ENCODE measurements at regions of chr1 and their contacts with region 1.

Region 1: DNA sequence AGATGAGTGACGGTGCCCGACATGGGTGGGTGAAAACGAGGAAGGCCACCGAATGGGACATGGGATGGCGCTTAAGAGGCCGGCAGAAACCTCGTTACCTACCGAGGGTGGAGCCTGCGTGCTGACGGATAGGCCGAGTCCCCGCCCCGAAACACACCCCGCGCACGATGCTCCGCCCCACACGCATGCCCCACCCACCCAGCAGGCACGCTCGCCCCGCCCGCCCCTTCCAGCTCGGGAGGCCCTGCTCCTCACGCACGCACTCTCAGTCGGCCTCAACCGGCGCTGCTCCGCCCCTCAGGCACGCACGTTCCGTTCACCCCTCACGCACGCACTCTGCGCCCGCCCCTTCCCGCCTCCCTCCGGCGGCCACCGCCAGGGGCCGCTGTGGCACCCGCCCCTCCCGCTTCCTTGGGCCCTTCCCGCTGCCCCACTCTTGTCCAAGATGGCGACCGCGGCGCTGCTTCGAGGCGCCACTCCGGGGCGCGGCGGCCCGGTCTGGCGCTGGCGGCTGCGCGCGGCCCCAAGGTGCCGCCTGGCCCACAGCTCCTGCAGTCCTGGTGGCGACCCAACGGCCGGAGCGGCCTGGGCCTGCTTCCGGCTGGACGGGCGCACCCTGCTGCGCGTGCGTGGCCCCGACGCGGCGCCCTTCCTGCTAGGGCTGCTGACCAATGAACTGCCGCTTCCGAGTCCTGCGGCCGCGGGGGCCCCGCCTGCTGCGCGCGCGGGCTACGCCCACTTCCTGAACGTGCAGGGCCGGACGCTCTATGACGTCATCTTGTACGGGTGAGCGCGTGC is at the start of gene IBA57:
- DNase-seq: peak; percentile 99 to 100 (median 100)
- H3K4me3 ChIP-seq: peak within 1 kb of the TSS; percentile 73 to 76
- H3K4me3 Mint-ChIP-seq: peak within 1 kb of the TSS; percentile 90 to 98 (median 92)
- H3K27ac ChIP-seq: peak within 1 kb of the TSS; percentile 96
- H3K27ac Mint-ChIP-seq: peak within 1 kb of the TSS; percentile 96 to 99 (median 98)
- H3K4me1 ChIP-seq: peaks cover 38% of the 10 kb centered on the region
- H3K4me1 Mint-ChIP-seq: peaks cover 22 to 70% (median 44%) of the 10 kb centered on the region in 4 donors
- H3K27me3 ChIP-seq: no peaks in the 10 kb centered on the region
- H3K27me3 Mint-ChIP-seq: no peaks in the 10 kb centered on the region
- total RNA-seq, gene IBA57: 10.9 to 12.0 TPM

Region 2: DNA sequence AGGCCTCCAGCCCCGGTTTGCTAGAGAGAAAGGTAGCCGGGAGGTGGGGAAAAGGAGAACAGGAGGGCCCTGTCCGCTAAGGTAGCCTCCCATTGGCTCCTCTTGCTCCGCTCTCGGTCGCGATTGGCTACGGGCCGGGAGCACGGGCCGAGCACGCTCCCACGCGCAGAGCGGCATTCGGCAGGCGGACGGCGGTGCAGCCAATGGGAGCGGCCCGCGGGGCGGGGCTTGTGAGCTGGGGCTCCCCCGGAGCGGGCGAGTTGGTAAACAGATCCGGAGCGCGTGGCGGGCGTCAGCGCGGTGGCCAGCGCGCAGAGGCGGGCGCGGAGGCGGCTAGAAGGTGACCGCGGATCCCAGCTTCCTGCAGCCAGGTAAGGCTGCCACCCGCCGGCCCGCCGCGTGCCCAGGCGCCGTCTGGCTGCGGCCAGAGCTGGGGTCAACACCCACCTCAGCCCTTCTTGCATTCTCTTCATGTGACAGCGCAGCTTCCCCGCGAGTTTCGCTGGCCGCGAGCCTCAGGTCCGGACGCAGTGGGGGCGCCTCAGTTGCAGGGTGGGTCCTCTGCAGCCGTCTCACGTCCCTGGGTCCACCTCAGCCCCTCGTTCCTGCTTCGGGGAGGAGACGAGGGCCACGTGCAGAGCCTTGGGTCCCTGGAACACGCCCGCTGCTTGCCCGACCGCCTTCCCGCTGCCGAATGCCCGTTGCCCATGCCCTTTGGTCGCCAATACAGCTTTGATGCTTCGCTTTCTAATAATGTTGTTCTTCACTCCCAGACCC is 1225.4 kb before region 1 on chr1 and contains the start of gene COQ8A:
- CTCF ChIA-PET with region 1: no interaction called
- POLR2A ChIA-PET with region 1: interaction called, 3 read pairs
- intact Hi-C with region 1: loop called (anchors 5 kb)
- DNase-seq: peak; percentile 98 to 100 (median 99)
- H3K4me3 ChIP-seq: peak within 1 kb of the TSS; percentile 75 to 84
- H3K4me3 Mint-ChIP-seq: peak within 1 kb of the TSS; percentile 89 to 95 (median 92)
- H3K27ac ChIP-seq: peak within 1 kb of the TSS; percentile 87
- H3K27ac Mint-ChIP-seq: peak within 1 kb of the TSS; percentile 96 to 98 (median 97)
- H3K4me1 ChIP-seq: peaks cover 40% of the 10 kb centered on the region
- H3K4me1 Mint-ChIP-seq: peaks cover 31 to 67% (median 50%) of the 10 kb centered on the region in 4 donors
- H3K27me3 ChIP-seq: no peaks in the 10 kb centered on the region
- H3K27me3 Mint-ChIP-seq: peaks cover 0 to 2% of the 10 kb centered on the region in 2 donors
- total RNA-seq, gene COQ8A: 69.2 to 70.7 TPM

Region 3: GRCh38 chr1:227946624-227947385 is 218.8 kb before region 1 on chr1:
- CTCF ChIA-PET with region 1: no interaction called
- POLR2A ChIA-PET with region 1: no interaction called
- intact Hi-C with region 1: no loop called
- DNase-seq: peak; percentile 36 to 63 (median 50)
- H3K4me3 ChIP-seq: peak overlapping the region; percentile 29 to 43
- H3K4me3 Mint-ChIP-seq: peak overlapping the region; percentile 75 to 84 (median 77)
- H3K27ac ChIP-seq: no peak overlapping the region
- H3K27ac Mint-ChIP-seq: no peak overlapping the region
- H3K4me1 ChIP-seq: peaks cover 18% of the 10 kb centered on the region
- H3K4me1 Mint-ChIP-seq: peaks cover 2 to 14% (median 8%) of the 10 kb centered on the region in 4 donors
- H3K27me3 ChIP-seq: peaks cover 6% of the 10 kb centered on the region
- H3K27me3 Mint-ChIP-seq: peaks cover 3 to 10% of the 10 kb centered on the region in 2 donors

Region 4: DNA sequence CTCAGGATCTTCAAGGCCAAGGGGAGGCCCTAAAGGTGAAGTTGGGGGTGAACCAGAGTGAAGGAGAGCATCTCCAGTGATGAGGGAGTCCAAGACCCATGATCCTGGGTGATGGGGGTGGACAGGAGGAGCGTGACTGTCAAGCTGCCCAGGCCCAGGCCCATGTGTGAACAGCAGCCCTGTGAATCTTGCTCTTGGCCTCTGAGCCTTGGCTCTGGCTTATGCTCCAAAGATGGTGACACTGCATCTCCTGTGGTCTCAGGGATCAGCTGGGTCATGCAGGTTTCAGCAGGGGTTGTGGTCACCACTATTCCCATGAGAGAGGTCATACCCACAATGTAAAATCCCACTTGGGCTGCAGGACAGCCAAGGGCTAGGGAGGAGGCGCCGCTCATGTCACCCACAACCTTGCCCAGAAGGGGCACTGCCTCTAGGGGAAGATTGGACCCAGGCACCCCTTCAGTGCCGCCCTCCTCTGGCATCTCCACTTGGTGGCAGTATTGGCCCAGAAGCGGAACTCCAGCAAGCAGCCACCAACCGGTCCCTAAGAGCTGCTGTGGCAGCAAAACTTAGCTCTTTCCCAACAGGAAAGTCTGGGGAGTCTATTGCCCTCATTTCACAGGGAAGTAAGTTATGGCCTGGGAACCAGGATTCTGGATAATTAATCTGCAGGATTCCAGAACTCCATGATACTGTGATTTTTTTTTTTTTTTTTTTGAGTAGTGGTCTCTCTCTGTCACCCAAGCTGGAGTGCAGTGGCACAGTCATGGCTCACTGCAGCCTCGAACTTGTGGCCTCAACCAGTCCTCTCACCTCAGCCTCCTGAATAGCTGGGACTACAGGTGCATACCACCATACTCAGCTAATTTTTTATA is 166.3 kb before region 1 on chr1:
- CTCF ChIA-PET with region 1: interaction called, 20 read pairs
- POLR2A ChIA-PET with region 1: interaction called, 4 read pairs
- intact Hi-C with region 1: no loop called
- DNase-seq: peak; percentile 61 to 73 (median 66)
- H3K4me3 ChIP-seq: no peak overlapping the region
- H3K4me3 Mint-ChIP-seq: no peak overlapping the region
- H3K27ac ChIP-seq: no peak overlapping the region
- H3K27ac Mint-ChIP-seq: no peak overlapping the region
- H3K4me1 ChIP-seq: no peaks in the 10 kb centered on the region
- H3K4me1 Mint-ChIP-seq: peaks cover 0 to 3% (median 0%) of the 10 kb centered on the region in 4 donors
- H3K27me3 ChIP-seq: peaks cover 8% of the 10 kb centered on the region
- H3K27me3 Mint-ChIP-seq: peaks cover 16 to 26% of the 10 kb centered on the region in 2 donors

Region 5: GRCh38 chr1:228037401-228038386 is 127.9 kb before region 1 on chr1:
- CTCF ChIA-PET with region 1: no interaction called
- POLR2A ChIA-PET with region 1: no interaction called
- intact Hi-C with region 1: no loop called
- DNase-seq: peak in 2 of 5 donors; percentile 9 to 10
- H3K4me3 ChIP-seq: no peak overlapping the region
- H3K4me3 Mint-ChIP-seq: peak overlapping the region in 6 of 8 donors; percentile 31 to 70 (median 44)
- H3K27ac ChIP-seq: no peak overlapping the region
- H3K27ac Mint-ChIP-seq: no peak overlapping the region
- H3K4me1 ChIP-seq: peaks cover 7% of the 10 kb centered on the region
- H3K4me1 Mint-ChIP-seq: peaks cover 0 to 3% (median under 1%) of the 10 kb centered on the region in 4 donors
- H3K27me3 ChIP-seq: peaks cover 23% of the 10 kb centered on the region
- H3K27me3 Mint-ChIP-seq: peaks cover 27 to 31% of the 10 kb centered on the region in 2 donors

Region 6: DNA sequence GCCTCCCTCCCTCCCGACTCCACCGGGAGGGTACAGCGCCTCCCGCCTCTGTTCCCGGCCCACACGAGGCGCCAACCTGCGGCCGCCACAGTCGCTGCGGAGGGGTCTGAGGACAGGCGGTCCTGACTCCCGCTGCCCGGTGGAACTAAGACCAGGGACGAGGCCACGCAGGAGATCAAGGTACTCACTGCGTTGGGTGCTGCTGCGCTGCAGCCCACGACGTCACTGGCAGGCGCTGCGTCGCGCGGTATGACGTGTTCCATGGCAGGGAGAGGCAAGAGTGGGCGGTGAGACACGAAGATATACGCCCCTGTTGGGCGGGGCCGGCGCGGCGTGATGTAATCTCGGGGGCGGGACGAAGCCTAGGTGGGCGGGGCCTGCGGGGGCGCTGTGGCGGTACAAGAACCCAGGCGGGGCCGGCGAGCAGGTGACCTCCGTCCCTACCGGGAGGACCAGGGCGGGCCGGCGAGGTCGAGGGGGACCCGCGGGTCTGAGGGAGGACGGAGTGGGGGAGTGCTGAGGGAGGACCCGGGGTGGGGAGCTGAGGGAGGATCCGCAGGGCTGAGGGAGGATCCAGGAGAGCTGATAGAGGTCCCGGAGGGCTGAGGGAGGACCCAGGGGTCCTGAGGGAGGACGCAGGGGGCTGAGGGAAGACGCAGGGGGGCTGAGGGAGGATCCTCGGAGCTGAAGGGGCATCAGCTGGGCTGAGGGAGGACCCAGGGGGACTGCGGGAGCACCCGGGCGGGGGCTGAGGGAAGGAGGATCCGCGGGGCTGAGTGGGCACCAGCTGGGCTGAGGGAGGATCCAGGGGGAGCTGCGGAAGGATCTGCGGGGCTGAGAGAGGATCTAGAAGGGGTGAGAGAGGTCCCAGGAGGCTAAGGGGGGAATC is 56.3 kb before region 1 on chr1 and contains the start of gene MRPL55:
- CTCF ChIA-PET with region 1: interaction called, 4 read pairs
- POLR2A ChIA-PET with region 1: interaction called, 26 read pairs
- intact Hi-C with region 1: loop called (anchors 1 kb)
- DNase-seq: peak; percentile 97 to 99 (median 98)
- H3K4me3 ChIP-seq: peak within 1 kb of the TSS; percentile 68 to 76
- H3K4me3 Mint-ChIP-seq: peak within 1 kb of the TSS; percentile 89 to 98 (median 94)
- H3K27ac ChIP-seq: peak within 1 kb of the TSS; percentile 92
- H3K27ac Mint-ChIP-seq: peak within 1 kb of the TSS; percentile 92 to 98 (median 95)
- H3K4me1 ChIP-seq: peaks cover 21% of the 10 kb centered on the region
- H3K4me1 Mint-ChIP-seq: peaks cover 9 to 45% (median 26%) of the 10 kb centered on the region in 4 donors
- H3K27me3 ChIP-seq: no peaks in the 10 kb centered on the region
- H3K27me3 Mint-ChIP-seq: no peaks in the 10 kb centered on the region
- total RNA-seq, gene MRPL55: 57.8 to 64.5 TPM

Region 7: GRCh38 chr1:228150461-228151179 is 15.0 kb before region 1 on chr1:
- CTCF ChIA-PET with region 1: interaction called, 3 read pairs
- POLR2A ChIA-PET with region 1: interaction called, 12 read pairs
- intact Hi-C with region 1: no loop called
- DNase-seq: peak in 1 of 5 donors; percentile 36
- H3K4me3 ChIP-seq: no peak overlapping the region
- H3K4me3 Mint-ChIP-seq: no peak overlapping the region
- H3K27ac ChIP-seq: no peak overlapping the region
- H3K27ac Mint-ChIP-seq: peak overlapping the region in 1 of 7 donors; percentile 35
- H3K4me1 ChIP-seq: peaks cover under 1% of the 10 kb centered on the region
- H3K4me1 Mint-ChIP-seq: peaks cover 0 to 4% (median 1%) of the 10 kb centered on the region in 4 donors
- H3K27me3 ChIP-seq: no peaks in the 10 kb centered on the region
- H3K27me3 Mint-ChIP-seq: no peaks in the 10 kb centered on the region

Region 8: DNA sequence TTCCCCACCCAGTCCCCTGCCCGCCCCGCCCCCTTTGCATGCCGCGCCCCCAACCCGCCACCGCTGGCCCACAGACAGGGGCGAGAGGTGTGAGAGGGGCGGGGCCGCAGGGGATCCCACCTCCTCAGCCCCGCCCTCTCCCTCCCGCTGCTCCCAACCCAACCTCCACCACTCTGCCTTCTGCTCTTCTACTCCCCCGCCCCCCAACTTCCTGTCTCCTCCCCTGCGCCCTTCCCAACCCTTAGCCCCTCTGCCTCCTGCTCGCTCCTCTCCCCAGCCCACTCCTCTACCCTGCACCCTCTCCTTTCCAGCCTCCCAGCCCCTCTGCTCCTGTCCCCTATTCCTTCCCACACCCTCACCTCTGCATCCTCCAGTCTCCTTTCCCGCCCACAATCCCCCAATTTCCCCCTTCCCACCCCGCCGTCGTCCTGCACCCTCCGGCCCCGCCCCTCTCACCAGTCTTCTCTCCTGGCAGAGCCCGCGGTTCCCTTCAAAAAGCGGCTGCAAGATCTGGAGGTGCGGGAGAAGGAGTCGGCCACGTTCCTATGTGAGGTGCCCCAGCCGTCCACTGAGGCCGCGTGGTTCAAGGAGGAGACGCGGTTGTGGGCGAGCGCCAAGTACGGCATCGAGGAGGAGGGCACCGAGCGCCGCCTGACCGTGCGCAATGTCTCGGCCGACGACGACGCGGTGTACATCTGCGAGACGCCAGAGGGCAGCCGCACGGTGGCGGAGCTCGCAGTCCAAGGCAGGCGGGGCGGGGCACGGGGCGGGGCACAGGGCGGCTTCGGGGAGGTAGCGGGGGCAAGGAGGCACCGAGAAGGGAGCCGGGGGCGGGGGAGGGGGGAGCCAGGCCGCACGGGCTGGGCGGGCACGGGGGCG is 47.6 kb after region 1 on chr1:
- CTCF ChIA-PET with region 1: interaction called, 4 read pairs
- POLR2A ChIA-PET with region 1: interaction called, 11 read pairs
- intact Hi-C with region 1: loop called (anchors 1 kb)
- DNase-seq: peak; percentile 82 to 92 (median 84)
- H3K4me3 ChIP-seq: peak overlapping the region; percentile 52
- H3K4me3 Mint-ChIP-seq: peak overlapping the region; percentile 83 to 94 (median 89)
- H3K27ac ChIP-seq: peak overlapping the region; percentile 46
- H3K27ac Mint-ChIP-seq: peak overlapping the region; percentile 68 to 95 (median 90)
- H3K4me1 ChIP-seq: peaks cover 7% of the 10 kb centered on the region
- H3K4me1 Mint-ChIP-seq: peaks cover 3 to 17% (median 9%) of the 10 kb centered on the region in 4 donors
- H3K27me3 ChIP-seq: no peaks in the 10 kb centered on the region
- H3K27me3 Mint-ChIP-seq: no peaks in the 10 kb centered on the region

Region 9: GRCh38 chr1:228457396-228458176 is 292.0 kb after region 1 on chr1:
- CTCF ChIA-PET with region 1: interaction called, 4 read pairs
- POLR2A ChIA-PET with region 1: interaction called, 10 read pairs
- intact Hi-C with region 1: loop called (anchors 2 kb)
- DNase-seq: peak; percentile 92 to 96 (median 94)
- H3K4me3 ChIP-seq: peak overlapping the region; percentile 67 to 86
- H3K4me3 Mint-ChIP-seq: peak overlapping the region; percentile 94 to 100 (median 96)
- H3K27ac ChIP-seq: peak overlapping the region; percentile 82
- H3K27ac Mint-ChIP-seq: peak overlapping the region; percentile 99 to 100 (median 99)
- H3K4me1 ChIP-seq: peaks cover 30% of the 10 kb centered on the region
- H3K4me1 Mint-ChIP-seq: peaks cover 30 to 64% (median 45%) of the 10 kb centered on the region in 4 donors
- H3K27me3 ChIP-seq: no peaks in the 10 kb centered on the region
- H3K27me3 Mint-ChIP-seq: peaks cover 0 to 5% of the 10 kb centered on the region in 2 donors

Measured in CD4-positive, alpha-beta memory T cell (primary cell).